Motor neuron (in vitro differentiated cells): ENCODE measurements at regions of chr1 and their contacts with region 1.

Region 1: GRCh38 chr1:170670802-170671628 is 7.1 kb downstream of the PRRX1 start:
- ATAC-seq: peak; percentile 58 to 84 (median 70)
- H3K4me3 ChIP-seq: no peak overlapping the region
- H3K27ac ChIP-seq: no peak overlapping the region
- H3K4me1 ChIP-seq: peaks cover 3 to 7% of the 10 kb centered on the region in 2 donors

Region 2: DNA sequence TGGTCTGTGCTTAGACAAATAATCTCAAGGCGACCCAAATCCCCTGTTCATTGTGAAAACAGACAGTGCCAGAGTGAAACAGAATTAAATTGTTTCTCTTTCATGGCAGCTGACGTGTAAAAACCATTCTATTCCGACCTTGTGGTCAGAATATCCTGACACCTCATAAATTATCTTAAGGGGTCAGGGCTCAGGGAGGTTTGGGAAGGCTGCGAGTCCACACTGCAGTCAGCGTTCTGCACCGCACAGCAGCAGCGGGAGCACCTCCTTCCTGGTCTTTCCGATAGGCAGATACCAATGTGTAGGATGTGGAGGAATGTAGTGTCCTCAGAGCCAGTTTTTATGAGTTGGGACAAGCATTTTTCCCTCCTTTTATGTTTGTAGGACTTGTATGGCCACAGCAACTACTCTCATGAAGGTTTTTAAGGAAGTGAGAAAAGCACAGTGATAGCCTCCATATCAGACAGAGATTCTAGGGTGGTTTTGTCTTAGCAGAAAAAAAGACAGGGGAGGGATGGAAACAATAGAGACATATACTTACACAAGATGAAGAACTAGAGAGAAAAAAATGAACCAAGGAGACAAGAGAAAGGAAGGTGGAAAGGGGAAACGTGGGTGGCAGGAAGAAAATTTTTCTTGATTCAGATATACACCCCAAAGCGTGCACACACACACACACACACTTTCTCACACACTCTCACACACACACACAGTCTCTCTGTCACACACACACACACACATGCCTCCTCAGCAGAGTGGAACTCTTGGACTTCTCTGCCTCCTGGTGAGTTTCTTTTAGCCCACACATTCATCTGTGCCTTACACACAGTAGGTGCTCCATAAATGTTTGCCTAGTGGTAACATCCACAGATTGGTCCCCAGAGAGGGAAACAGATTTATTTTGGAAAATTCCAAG is 456.6 kb before region 1 on chr1:
- in situ Hi-C with region 1: loop called in 1 of 9 experiments (anchors 25 kb)
- ATAC-seq: peak in 5 of 8 experiments; percentile 34 to 76 (median 64)
- H3K4me3 ChIP-seq: no peak overlapping the region
- H3K27ac ChIP-seq: no peak overlapping the region
- H3K4me1 ChIP-seq: peaks cover 11 to 22% of the 10 kb centered on the region in 2 donors

Region 3: GRCh38 chr1:170231669-170232068 is 439.3 kb before region 1 on chr1:
- in situ Hi-C with region 1: no loop called
- ATAC-seq: no peak
- H3K4me3 ChIP-seq: no peak overlapping the region
- H3K27ac ChIP-seq: no peak overlapping the region
- H3K4me1 ChIP-seq: peaks cover 0 to 9% of the 10 kb centered on the region in 2 donors

Region 4: DNA sequence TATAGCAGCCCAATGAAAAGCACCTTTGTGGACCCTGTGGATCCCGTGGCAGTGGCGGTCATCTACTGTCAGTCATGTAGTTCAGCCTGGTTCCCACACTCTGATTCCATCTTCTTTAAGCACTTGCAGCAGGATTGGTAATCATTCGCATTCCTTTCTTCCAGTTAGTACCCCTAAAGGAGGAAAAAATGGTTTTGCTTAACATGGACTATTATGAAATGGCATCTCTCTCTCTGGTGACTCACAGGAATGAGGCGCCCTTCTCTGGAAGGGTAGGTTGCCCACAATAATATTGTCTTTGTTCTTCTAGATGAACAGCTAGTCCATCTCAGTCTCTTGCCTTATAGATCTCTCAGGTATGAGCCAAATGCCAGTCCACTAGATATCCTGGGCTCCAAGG is 136.4 kb after region 1 on chr1:
- in situ Hi-C with region 1: no loop called
- ATAC-seq: no peak
- H3K4me3 ChIP-seq: no peak overlapping the region
- H3K27ac ChIP-seq: no peak overlapping the region
- H3K4me1 ChIP-seq: no peaks in the 10 kb centered on the region